Activated naive CD8-positive, alpha-beta T cell treated with anti-CD3 and anti-CD28 coated beads, Interleukin-2, amount 10 ng/mL, durations not matched to agents 7 days and 5 days (primary cell): ENCODE measurements at regions of chr16 and their contacts with region 1.

Region 1: GRCh38 chr16:3065069-3065741 is at the start of gene IL32:
- DNase-seq: peak; percentile 77
- ATAC-seq: peak; percentile 59
- H3K4me3 Mint-ChIP-seq: peak within 1 kb of the TSS; percentile 98
- H3K27ac Mint-ChIP-seq: peak within 1 kb of the TSS; percentile 98
- H3K4me1 Mint-ChIP-seq: peaks cover 46% of the 10 kb centered on the region
- H3K27me3 Mint-ChIP-seq: no peaks in the 10 kb centered on the region
- total RNA-seq, gene IL32: 2,319 to 2,425 TPM

Region 2: DNA sequence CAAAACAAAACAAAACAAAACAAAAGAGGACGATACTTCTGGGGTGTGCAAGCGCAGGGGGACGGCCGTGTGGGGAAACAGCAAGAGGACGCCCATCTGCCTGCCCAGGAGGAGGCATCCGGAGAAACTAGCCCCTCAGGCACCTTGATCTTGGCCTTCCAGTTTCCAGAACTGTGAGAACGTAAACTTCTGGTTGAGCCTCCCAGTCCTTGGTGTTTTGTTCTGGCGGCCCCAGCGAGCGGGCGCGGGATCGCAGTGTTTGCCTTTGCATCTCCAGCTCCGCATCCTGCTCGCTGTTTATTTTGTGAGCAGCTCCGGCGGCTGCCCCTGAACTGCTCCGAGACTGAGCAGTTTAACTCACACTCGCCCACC is 19.9 kb before region 1 on chr16:
- POLR2A ChIA-PET with region 1: interaction called, 131 read pairs
- DNase-seq: no peak
- ATAC-seq: peak; percentile 45
- H3K4me3 Mint-ChIP-seq: peak overlapping the region; percentile 77
- H3K27ac Mint-ChIP-seq: peak overlapping the region; percentile 83
- H3K4me1 Mint-ChIP-seq: peaks cover 23% of the 10 kb centered on the region
- H3K27me3 Mint-ChIP-seq: peaks cover 35% of the 10 kb centered on the region

Region 3: GRCh38 chr16:3094289-3095027 is 29.3 kb after region 1 on chr16:
- POLR2A ChIA-PET with region 1: interaction called, 13 read pairs
- DNase-seq: no peak
- ATAC-seq: peak; percentile 37
- H3K4me3 Mint-ChIP-seq: peak overlapping the region; percentile 8
- H3K27ac Mint-ChIP-seq: peak overlapping the region; percentile 54
- H3K4me1 Mint-ChIP-seq: peaks cover 23% of the 10 kb centered on the region
- H3K27me3 Mint-ChIP-seq: peaks cover 2% of the 10 kb centered on the region

Region 4: DNA sequence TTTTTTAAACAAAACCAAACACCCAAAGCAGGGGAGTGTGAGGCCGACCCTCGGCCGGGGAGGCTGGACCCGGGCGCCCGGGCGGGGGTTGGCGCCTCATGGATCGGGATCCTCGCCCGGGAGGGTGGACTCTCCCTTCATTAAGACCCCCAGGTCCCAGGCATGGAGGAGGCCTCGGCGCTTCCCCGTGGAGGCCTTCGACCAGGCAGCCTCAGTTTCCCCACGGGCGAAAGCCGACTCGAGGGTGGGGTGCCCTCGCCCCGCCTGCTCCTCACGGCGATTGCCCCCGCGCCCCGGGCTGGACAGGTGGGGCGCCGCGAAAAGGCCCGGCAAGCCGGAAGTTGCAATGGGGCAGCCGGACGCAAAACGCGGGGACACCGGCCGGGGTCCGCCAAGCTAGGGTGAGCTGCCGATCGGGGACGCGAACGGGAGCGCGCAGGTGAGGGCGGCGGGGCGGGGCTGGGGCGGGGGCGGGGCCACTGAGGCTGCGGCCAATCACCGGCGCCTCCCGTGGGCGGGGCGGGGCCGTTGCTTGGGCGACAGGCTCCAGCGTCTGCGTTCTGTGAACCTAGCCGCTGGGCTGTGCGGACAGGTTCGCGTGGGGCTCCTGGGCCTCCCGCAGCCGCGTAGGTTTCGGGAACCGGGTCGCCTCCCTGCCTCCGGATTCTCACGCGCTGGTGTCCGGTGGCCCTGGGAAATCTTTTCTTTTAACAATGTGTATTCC is 41.2 kb after region 1 on chr16:
- POLR2A ChIA-PET with region 1: interaction called, 14 read pairs
- DNase-seq: peak; percentile 95
- ATAC-seq: peak; percentile 89
- H3K4me3 Mint-ChIP-seq: peak overlapping the region; percentile 82
- H3K27ac Mint-ChIP-seq: peak overlapping the region; percentile 89
- H3K4me1 Mint-ChIP-seq: peaks cover 20% of the 10 kb centered on the region
- H3K27me3 Mint-ChIP-seq: peaks cover 2% of the 10 kb centered on the region

Region 5: DNA sequence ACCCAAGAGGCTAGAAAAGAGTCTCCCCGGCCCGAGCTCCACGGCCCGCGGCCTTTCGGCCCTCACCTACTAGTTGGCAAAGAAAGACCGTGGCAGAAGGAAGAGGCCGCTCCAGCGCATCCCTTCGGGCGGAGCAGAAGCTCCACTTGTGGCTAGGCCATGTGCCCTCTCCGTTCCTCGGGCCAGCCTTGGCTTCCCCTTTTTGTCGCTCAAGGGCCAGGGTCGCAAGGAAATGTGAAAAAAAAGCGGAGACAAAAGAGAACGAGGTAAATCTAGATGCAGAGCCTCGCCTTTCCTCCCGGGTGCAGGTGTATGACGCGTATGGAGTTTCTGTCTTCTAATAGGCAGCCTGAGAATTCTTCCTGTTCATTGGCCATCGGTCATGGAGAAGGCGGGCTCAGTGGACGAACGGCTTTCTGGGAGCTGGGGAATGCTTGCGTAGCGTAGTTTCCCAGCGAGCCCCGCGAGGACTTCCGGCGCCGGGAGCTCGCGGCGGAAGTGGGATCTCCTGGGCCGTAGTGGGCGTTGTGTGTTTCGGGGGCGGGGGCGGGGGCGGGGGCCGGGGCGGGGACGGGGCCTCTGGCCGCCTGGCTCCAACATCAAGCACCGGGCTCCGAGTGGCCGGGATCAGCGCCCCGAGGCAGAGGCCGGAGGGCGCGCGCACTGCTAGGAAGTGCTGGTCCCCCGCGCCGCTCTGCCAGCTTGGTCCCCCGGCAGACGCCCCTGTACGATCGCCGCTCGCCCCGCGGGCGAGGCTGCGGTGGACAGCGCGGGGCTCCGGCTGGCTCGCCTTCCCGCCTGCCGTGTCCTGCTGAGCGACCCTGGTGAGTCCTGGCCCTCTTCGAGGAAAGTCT is 69.6 kb after region 1 on chr16 and contains the start of gene ZNF213:
- POLR2A ChIA-PET with region 1: interaction called, 121 read pairs
- DNase-seq: peak; percentile 87
- ATAC-seq: peak; percentile 95
- H3K4me3 Mint-ChIP-seq: peak within 1 kb of the TSS; percentile 99
- H3K27ac Mint-ChIP-seq: peak within 1 kb of the TSS; percentile 95
- H3K4me1 Mint-ChIP-seq: peaks cover 23% of the 10 kb centered on the region
- H3K27me3 Mint-ChIP-seq: no peaks in the 10 kb centered on the region
- total RNA-seq, gene ZNF213: 12.9 to 13.3 TPM